Naive thymus-derived CD4-positive, alpha-beta T cell (primary cell): ENCODE measurements at regions of chr9 and their contacts with region 1.

Region 1: GRCh38 chr9:37592108-37592951 is at the start of gene TOMM5:
- DNase-seq: peak; percentile 80 to 92 (median 90)
- ATAC-seq: peak; percentile 99
- H3K4me3 ChIP-seq: peak within 1 kb of the TSS; percentile 95
- H3K4me3 Mint-ChIP-seq: peak within 1 kb of the TSS; percentile 93 to 100 (median 98)
- H3K27ac ChIP-seq: peak within 1 kb of the TSS; percentile 88
- H3K27ac Mint-ChIP-seq: peak within 1 kb of the TSS; percentile 93 to 98 (median 96)
- H3K4me1 ChIP-seq: peaks cover 6 to 12% of the 10 kb centered on the region in 2 donors
- H3K4me1 Mint-ChIP-seq: peaks cover 8 to 51% (median 44%) of the 10 kb centered on the region in 7 donors
- H3K27me3 ChIP-seq: no peaks in the 10 kb centered on the region
- H3K27me3 Mint-ChIP-seq: peaks cover 0 to 22% (median 9%) of the 10 kb centered on the region in 5 donors
- total RNA-seq, gene TOMM5: 33.6 to 86.8 (median 44.7) TPM

Region 2: DNA sequence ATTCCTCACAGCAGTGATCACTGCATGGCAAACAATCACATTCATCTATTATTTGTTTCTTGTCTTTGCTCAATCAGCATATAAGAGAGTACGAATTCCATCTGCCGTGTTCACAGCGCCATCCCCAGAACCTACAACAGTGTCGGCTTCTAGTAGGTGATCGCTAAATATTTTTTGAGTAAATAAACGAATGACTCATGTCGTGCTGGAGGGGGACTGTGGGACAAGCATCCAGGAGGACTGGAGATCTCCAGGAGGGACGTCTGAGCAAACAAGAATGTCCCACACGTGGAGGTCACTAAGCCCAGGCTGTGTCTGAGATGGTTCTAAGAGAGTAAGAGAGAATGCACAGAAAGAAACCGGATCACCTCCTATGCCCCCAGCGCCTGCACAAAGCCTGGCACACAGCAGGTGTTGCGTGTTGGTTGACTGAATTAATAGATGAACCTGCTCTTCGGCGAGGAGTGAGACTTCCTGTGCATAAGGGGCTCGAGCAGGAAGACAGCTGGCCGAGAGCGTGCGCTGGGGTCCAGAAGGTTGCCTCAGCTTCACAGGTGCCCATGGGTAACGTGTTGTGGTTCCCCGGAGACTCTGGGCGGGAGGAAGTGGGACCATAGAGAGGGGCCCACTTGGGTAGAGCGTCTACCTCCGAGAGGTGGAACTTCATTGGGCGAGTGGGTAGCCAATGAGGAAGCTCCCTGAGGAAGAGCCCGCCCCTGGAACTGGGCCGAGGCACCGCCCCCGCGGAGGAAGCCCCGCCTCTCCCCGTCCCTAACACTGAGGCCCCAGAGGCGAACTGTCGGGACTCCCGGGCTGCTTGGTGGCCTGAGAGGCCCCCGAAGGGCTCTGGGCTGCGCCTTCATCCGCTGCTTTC is 826.6 kb before region 1 on chr9:
- CTCF ChIA-PET with region 1: no interaction called
- POLR2A ChIA-PET with region 1: no interaction called
- intact Hi-C with region 1: loop called in 1 of 2 experiments (anchors 1 kb)
- DNase-seq: peak; percentile 81 to 96 (median 91)
- ATAC-seq: peak; percentile 100
- H3K4me3 ChIP-seq: peak overlapping the region; percentile 56
- H3K4me3 Mint-ChIP-seq: no peak overlapping the region
- H3K27ac ChIP-seq: peak overlapping the region; percentile 56
- H3K27ac Mint-ChIP-seq: no peak overlapping the region
- H3K4me1 ChIP-seq: no peaks in the 10 kb centered on the region
- H3K4me1 Mint-ChIP-seq: peaks cover 0 to 6% (median 2%) of the 10 kb centered on the region in 7 donors
- H3K27me3 ChIP-seq: no peaks in the 10 kb centered on the region
- H3K27me3 Mint-ChIP-seq: peaks cover 0 to 16% (median 11%) of the 10 kb centered on the region in 5 donors

Region 3: DNA sequence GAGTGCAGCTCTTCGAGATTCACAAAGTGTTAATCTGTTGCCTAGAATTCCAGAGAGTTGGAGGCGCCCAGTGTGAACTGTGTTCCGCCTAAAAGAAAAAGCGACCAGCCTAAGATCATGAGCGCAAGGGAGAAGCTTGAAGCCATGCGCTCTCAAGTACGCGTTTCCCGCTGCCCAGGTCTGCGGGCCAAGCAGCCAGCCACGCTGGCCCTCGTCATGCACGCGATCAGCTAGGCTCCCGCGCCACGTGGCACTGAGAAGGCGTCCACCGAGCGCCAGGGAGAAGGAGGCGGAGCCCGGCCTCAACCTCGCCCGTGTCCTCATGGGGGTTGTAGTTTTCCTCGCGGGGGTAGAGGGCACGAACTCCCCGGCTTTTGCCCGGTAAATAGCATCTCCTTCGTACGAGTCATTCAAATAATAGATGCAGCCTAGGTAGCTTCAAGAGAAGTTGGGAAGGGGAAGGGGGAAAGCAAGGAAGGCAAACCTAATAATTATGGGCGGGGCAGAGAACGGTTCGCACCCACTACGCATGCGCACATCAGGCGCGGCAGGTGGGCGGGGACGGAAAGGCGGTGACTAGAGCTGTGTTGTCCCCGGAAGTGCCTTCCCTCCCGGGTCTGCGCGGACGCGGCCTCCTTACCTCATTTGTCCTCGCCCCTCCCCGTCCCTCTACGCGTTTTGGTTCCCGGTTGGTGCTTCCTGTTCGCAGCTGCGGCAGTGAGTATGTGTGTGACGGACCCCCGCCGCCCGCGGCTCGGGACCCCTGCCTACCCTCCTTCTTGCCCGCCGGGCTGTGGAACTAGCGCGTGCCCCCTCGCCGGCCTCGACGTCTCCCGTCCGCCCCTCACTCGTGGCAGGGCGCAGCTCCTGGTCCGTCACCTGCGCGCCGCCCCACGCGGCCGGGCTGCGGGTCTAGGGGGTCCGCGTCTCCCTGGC is 472.2 kb before region 1 on chr9 and contains the start of gene ZCCHC7:
- CTCF ChIA-PET with region 1: no interaction called
- POLR2A ChIA-PET with region 1: no interaction called
- intact Hi-C with region 1: loop called in 1 of 2 experiments (anchors 10 kb)
- DNase-seq: peak; percentile 95 to 99 (median 98)
- ATAC-seq: peak; percentile 97
- H3K4me3 ChIP-seq: peak within 1 kb of the TSS; percentile 93
- H3K4me3 Mint-ChIP-seq: peak within 1 kb of the TSS; percentile 88 to 99 (median 96)
- H3K27ac ChIP-seq: peak within 1 kb of the TSS; percentile 100
- H3K27ac Mint-ChIP-seq: peak within 1 kb of the TSS; percentile 93 to 100 (median 97)
- H3K4me1 ChIP-seq: peaks cover 11 to 25% of the 10 kb centered on the region in 2 donors
- H3K4me1 Mint-ChIP-seq: peaks cover 16 to 42% (median 32%) of the 10 kb centered on the region in 7 donors
- H3K27me3 ChIP-seq: no peaks in the 10 kb centered on the region
- H3K27me3 Mint-ChIP-seq: no peaks in the 10 kb centered on the region
- total RNA-seq, gene ZCCHC7: 26.1 to 47.1 (median 40.9) TPM

Region 4: DNA sequence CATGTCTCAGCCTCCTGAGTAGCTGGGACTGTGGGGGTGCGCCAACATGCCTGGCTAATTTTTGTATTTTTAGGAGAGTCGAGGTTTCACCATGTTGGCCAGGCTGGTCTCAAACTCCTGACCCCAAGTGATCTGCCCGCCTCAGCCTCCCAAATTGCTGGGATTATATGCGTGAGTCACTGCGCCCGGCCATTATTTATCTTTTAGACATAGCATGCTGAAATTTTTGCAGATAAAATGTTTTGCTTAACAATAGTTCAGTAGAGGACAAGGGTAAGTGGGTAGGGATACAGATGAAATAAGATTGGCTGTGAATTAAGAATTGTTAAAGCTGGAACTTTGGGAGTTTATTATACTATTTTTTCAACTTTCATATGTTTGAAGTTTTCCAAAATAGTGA is 320.7 kb before region 1 on chr9:
- CTCF ChIA-PET with region 1: no interaction called
- POLR2A ChIA-PET with region 1: no interaction called
- intact Hi-C with region 1: no loop called
- DNase-seq: no peak
- ATAC-seq: no peak
- H3K4me3 ChIP-seq: no peak overlapping the region
- H3K4me3 Mint-ChIP-seq: no peak overlapping the region
- H3K27ac ChIP-seq: no peak overlapping the region
- H3K27ac Mint-ChIP-seq: no peak overlapping the region
- H3K4me1 ChIP-seq: no peaks in the 10 kb centered on the region
- H3K4me1 Mint-ChIP-seq: peaks cover 0 to 17% (median 7%) of the 10 kb centered on the region in 7 donors
- H3K27me3 ChIP-seq: no peaks in the 10 kb centered on the region
- H3K27me3 Mint-ChIP-seq: no peaks in the 10 kb centered on the region

Region 5: GRCh38 chr9:37575921-37576721 is 16.2 kb before region 1 on chr9 and contains the start of gene FBXO10:
- CTCF ChIA-PET with region 1: interaction called, 3 read pairs
- POLR2A ChIA-PET with region 1: interaction called, 6 read pairs
- intact Hi-C with region 1: loop called (anchors 2 kb)
- DNase-seq: peak; percentile 10 to 73 (median 31)
- ATAC-seq: peak; percentile 80
- H3K4me3 ChIP-seq: peak within 1 kb of the TSS; percentile 66
- H3K4me3 Mint-ChIP-seq: peak within 1 kb of the TSS; percentile 83 to 93 (median 88)
- H3K27ac ChIP-seq: peak within 1 kb of the TSS; percentile 11
- H3K27ac Mint-ChIP-seq: peak within 1 kb of the TSS in 7 of 9 donors; percentile 17 to 68 (median 64)
- H3K4me1 ChIP-seq: peaks cover 0 to 8% of the 10 kb centered on the region in 2 donors
- H3K4me1 Mint-ChIP-seq: peaks cover 6 to 29% (median 23%) of the 10 kb centered on the region in 7 donors
- H3K27me3 ChIP-seq: no peaks in the 10 kb centered on the region
- H3K27me3 Mint-ChIP-seq: peaks cover 0 to 10% (median 0%) of the 10 kb centered on the region in 5 donors
- total RNA-seq, gene FBXO10: 0.85 to 2.6 (median 2.2) TPM

Region 6: DNA sequence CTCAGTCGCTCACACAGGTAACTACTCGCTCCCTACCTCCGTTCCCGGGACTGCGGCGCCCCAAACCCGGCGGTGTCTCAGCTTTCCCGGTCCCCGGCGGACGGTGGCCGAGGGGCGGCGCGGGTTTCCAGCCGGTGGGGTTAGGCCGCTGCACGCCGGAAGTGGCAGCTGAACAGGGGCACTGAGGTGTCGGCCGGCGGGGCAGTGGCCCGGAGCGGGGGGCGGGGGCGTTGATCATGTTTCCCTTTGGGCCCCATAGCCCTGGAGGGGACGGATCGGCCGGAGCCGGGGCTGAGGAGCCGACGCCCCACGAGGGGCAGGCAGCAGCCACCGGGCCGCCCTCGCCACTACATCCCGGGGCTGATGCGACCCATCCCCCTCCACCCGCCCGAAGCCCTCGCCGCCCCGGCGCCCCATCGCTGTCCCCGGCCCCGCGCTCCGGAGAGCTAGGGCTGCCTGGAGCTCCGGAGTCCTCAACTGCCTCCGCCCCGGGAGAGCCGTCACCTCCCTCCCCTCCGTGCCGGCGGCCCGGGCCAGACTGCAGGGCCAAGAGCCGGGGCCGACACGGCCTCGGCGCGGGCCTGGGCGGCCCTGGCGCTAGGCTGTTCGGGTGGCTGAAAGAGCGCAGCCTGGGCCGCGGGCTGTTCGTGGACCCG is 208.4 kb after region 1 on chr9 and contains the start of gene DCAF10:
- CTCF ChIA-PET with region 1: no interaction called
- POLR2A ChIA-PET with region 1: no interaction called
- intact Hi-C with region 1: loop called (anchors 1 to 5 kb)
- DNase-seq: peak; percentile 80 to 97 (median 87)
- ATAC-seq: peak; percentile 95
- H3K4me3 ChIP-seq: peak within 1 kb of the TSS; percentile 97
- H3K4me3 Mint-ChIP-seq: peak within 1 kb of the TSS; percentile 86 to 95 (median 93)
- H3K27ac ChIP-seq: peak within 1 kb of the TSS; percentile 69
- H3K27ac Mint-ChIP-seq: peak within 1 kb of the TSS; percentile 71 to 95 (median 90)
- H3K4me1 ChIP-seq: peaks cover 19 to 26% of the 10 kb centered on the region in 2 donors
- H3K4me1 Mint-ChIP-seq: peaks cover 24 to 55% (median 42%) of the 10 kb centered on the region in 7 donors
- H3K27me3 ChIP-seq: no peaks in the 10 kb centered on the region
- H3K27me3 Mint-ChIP-seq: no peaks in the 10 kb centered on the region
- total RNA-seq, gene DCAF10: 12.1 to 22.5 (median 21.3) TPM

Region 7: DNA sequence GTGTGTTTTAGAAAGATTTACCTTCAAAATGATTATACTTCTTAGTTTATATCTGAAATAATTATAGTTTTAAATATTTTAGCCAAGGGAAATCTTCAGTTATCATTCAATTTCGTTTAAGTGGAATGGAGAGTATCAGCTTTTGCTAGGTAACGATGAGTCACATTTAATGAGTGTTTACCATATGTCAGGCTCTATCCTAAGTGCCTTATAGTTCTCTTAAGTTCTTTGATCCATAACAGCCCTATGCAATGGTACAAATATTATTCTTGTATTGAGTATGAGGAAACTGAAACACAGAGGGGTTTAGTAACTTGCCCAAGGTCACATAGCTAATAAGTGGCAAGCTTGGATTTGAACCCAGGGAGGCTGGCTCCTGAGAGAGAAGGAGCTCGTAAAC is 514.2 kb after region 1 on chr9:
- CTCF ChIA-PET with region 1: no interaction called
- POLR2A ChIA-PET with region 1: no interaction called
- intact Hi-C with region 1: no loop called
- DNase-seq: no peak
- ATAC-seq: no peak
- H3K4me3 ChIP-seq: no peak overlapping the region
- H3K4me3 Mint-ChIP-seq: no peak overlapping the region
- H3K27ac ChIP-seq: no peak overlapping the region
- H3K27ac Mint-ChIP-seq: no peak overlapping the region
- H3K4me1 ChIP-seq: no peaks in the 10 kb centered on the region
- H3K4me1 Mint-ChIP-seq: no peaks in the 10 kb centered on the region
- H3K27me3 ChIP-seq: no peaks in the 10 kb centered on the region
- H3K27me3 Mint-ChIP-seq: peaks cover 11 to 21% (median 17%) of the 10 kb centered on the region in 5 donors